CD4-positive, alpha-beta memory T cell (primary cell): ENCODE measurements at regions of chr7 and their contacts with region 1.

Region 1: GRCh38 chr7:103148994-103149807 is at the start of gene NAPEPLD:
- DNase-seq: peak; percentile 70 to 86 (median 81)
- H3K4me3 ChIP-seq: peak within 1 kb of the TSS; percentile 71 to 80
- H3K4me3 Mint-ChIP-seq: peak within 1 kb of the TSS; percentile 96 to 99 (median 98)
- H3K27ac ChIP-seq: peak within 1 kb of the TSS; percentile 71
- H3K27ac Mint-ChIP-seq: peak within 1 kb of the TSS; percentile 90 to 99 (median 97)
- H3K4me1 ChIP-seq: peaks cover 31% of the 10 kb centered on the region
- H3K4me1 Mint-ChIP-seq: peaks cover 21 to 55% (median 40%) of the 10 kb centered on the region in 4 donors
- H3K27me3 ChIP-seq: no peaks in the 10 kb centered on the region
- H3K27me3 Mint-ChIP-seq: no peaks in the 10 kb centered on the region
- total RNA-seq, gene NAPEPLD: 21.6 to 22.2 TPM

Region 2: DNA sequence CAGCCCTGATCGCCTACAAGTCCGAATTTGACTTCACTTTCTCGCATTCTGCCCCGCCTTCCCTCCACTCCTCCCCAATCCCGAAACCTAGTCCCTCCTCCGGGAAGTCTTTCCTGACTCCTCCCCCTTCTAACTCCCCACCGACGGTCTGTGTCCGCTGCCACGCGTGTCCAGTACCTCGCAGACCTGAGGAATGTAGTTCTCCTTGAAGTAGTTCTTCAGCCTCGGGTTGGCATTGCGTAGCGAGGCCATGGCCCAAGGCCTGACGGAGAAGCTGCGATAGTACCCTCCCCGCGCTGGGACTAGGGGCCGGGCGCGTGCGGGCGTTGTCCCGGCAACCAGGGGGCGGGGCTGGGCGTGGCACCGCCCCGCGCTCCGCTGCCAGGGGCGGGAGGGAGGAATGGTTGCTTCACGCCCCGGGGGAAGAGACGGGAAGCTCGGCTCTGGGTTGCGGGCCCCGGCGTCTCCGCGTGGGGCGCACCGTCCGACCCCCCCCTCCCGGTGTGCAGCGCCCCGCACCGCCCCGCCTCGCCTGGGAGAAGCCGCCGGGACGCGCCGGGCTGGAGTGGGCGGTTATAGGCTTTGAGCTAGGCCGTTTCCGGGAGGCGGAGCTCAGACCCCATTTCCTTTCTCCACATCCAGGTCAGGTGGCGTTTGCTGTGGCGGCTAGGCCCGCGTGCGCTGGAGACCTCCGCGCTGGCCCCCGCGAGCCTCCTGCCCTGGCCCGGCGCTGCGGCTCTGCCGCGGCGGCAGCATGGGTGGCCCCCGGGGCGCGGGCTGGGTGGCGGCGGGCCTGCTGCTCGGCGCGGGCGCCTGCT is 74.5 kb before region 1 on chr7 and contains the starts of genes ARMC10 and FBXL13:
- CTCF ChIA-PET with region 1: interaction called, 4 read pairs
- POLR2A ChIA-PET with region 1: interaction called, 28 read pairs
- intact Hi-C with region 1: loop called (anchors 1 kb)
- DNase-seq: peak; percentile 89 to 91 (median 90)
- H3K4me3 ChIP-seq: peak within 1 kb of the TSS; percentile 75 to 79
- H3K4me3 Mint-ChIP-seq: peak within 1 kb of the TSS; percentile 94 to 99 (median 96)
- H3K27ac ChIP-seq: peak within 1 kb of the TSS; percentile 77
- H3K27ac Mint-ChIP-seq: peak within 1 kb of the TSS; percentile 92 to 99 (median 98)
- H3K4me1 ChIP-seq: peaks cover 35% of the 10 kb centered on the region
- H3K4me1 Mint-ChIP-seq: peaks cover 29 to 45% (median 37%) of the 10 kb centered on the region in 4 donors
- H3K27me3 ChIP-seq: no peaks in the 10 kb centered on the region
- H3K27me3 Mint-ChIP-seq: no peaks in the 10 kb centered on the region
- total RNA-seq, gene ARMC10: 28.4 to 28.8 TPM
- total RNA-seq, gene FBXL13: 0.49 to 2.2 TPM

Region 3: GRCh38 chr7:103296901-103297836 is 148.0 kb after region 1 on chr7 and contains the start of gene PMPCB:
- CTCF ChIA-PET with region 1: no interaction called
- POLR2A ChIA-PET with region 1: no interaction called
- intact Hi-C with region 1: loop called (anchors 1 kb)
- DNase-seq: peak; percentile 93 to 96 (median 94)
- H3K4me3 ChIP-seq: peak within 1 kb of the TSS; percentile 70 to 76
- H3K4me3 Mint-ChIP-seq: peak within 1 kb of the TSS; percentile 83 to 94 (median 92)
- H3K27ac ChIP-seq: peak within 1 kb of the TSS; percentile 88
- H3K27ac Mint-ChIP-seq: peak within 1 kb of the TSS; percentile 90 to 96 (median 93)
- H3K4me1 ChIP-seq: peaks cover 29% of the 10 kb centered on the region
- H3K4me1 Mint-ChIP-seq: peaks cover 20 to 46% (median 30%) of the 10 kb centered on the region in 4 donors
- H3K27me3 ChIP-seq: no peaks in the 10 kb centered on the region
- H3K27me3 Mint-ChIP-seq: peaks cover 0 to under 1% of the 10 kb centered on the region in 2 donors
- total RNA-seq, gene PMPCB: 72.7 to 76.2 TPM

Region 4: DNA sequence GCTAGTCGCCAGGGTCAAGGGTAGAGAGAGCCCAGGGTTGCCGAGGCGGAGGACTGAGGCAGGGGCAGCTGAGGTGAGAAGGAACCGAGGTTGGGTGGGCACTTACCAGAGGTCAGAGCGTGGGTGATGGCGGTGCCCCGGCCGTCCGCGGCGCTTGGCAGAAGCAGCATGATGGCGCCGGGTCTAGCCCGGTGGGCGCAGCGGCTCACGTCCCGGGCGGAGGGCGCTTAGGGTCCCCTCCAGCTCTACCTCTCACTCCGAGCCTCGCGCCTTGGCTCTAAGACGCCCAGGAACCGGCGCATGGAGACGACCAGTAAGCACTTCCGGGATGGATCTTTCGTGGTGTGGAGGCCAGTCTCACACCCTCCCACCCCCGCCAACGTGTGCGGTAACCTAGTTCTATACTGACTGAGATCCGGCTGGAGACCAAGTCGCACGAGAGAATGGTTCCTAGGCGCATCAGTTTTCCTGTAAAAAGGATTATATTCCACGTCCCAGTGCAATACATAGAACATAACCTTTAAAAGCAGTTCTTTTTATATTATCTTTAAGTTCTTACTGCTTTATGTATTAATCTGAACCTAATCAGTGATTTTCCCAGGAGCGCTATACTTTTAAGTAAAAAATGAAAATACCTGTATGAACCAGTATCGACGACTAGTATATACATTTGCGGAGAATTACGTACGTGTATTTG is 195.4 kb after region 1 on chr7 and contains the start of gene DNAJC2:
- CTCF ChIA-PET with region 1: no interaction called
- POLR2A ChIA-PET with region 1: no interaction called
- intact Hi-C with region 1: loop called (anchors 5 kb)
- DNase-seq: peak; percentile 85 to 91 (median 87)
- H3K4me3 ChIP-seq: peak within 1 kb of the TSS; percentile 70
- H3K4me3 Mint-ChIP-seq: peak within 1 kb of the TSS; percentile 98 to 100 (median 99)
- H3K27ac ChIP-seq: peak within 1 kb of the TSS; percentile 82
- H3K27ac Mint-ChIP-seq: peak within 1 kb of the TSS; percentile 96 to 99 (median 98)
- H3K4me1 ChIP-seq: peaks cover 63% of the 10 kb centered on the region
- H3K4me1 Mint-ChIP-seq: peaks cover 37 to 83% (median 63%) of the 10 kb centered on the region in 4 donors
- H3K27me3 ChIP-seq: no peaks in the 10 kb centered on the region
- H3K27me3 Mint-ChIP-seq: no peaks in the 10 kb centered on the region
- total RNA-seq, gene DNAJC2: 36.0 to 40.5 TPM

Region 5: GRCh38 chr7:104207731-104208420 is 1058.7 kb after region 1 on chr7 and contains the start of gene ORC5:
- CTCF ChIA-PET with region 1: no interaction called
- POLR2A ChIA-PET with region 1: no interaction called
- intact Hi-C with region 1: loop called (anchors 10 kb)
- DNase-seq: peak; percentile 70 to 74 (median 73)
- H3K4me3 ChIP-seq: peak within 1 kb of the TSS; percentile 63 to 74
- H3K4me3 Mint-ChIP-seq: peak within 1 kb of the TSS; percentile 92 to 98 (median 96)
- H3K27ac ChIP-seq: peak within 1 kb of the TSS; percentile 69
- H3K27ac Mint-ChIP-seq: peak within 1 kb of the TSS; percentile 86 to 98 (median 97)
- H3K4me1 ChIP-seq: peaks cover 28% of the 10 kb centered on the region
- H3K4me1 Mint-ChIP-seq: peaks cover 26 to 38% (median 31%) of the 10 kb centered on the region in 4 donors
- H3K27me3 ChIP-seq: no peaks in the 10 kb centered on the region
- H3K27me3 Mint-ChIP-seq: peaks cover 6 to 18% of the 10 kb centered on the region in 2 donors
- total RNA-seq, gene ORC5: 26.4 to 31.2 TPM